ENCODE measurements at regions of chr3 and their contacts with region 1.

Region 1: GRCh38 chr3:69671082-69671952 is 67.9 kb upstream of the MITF start:
- DNase-seq: peak; percentile 32
- ATAC-seq: peak; percentile 47 to 64

Region 2: DNA sequence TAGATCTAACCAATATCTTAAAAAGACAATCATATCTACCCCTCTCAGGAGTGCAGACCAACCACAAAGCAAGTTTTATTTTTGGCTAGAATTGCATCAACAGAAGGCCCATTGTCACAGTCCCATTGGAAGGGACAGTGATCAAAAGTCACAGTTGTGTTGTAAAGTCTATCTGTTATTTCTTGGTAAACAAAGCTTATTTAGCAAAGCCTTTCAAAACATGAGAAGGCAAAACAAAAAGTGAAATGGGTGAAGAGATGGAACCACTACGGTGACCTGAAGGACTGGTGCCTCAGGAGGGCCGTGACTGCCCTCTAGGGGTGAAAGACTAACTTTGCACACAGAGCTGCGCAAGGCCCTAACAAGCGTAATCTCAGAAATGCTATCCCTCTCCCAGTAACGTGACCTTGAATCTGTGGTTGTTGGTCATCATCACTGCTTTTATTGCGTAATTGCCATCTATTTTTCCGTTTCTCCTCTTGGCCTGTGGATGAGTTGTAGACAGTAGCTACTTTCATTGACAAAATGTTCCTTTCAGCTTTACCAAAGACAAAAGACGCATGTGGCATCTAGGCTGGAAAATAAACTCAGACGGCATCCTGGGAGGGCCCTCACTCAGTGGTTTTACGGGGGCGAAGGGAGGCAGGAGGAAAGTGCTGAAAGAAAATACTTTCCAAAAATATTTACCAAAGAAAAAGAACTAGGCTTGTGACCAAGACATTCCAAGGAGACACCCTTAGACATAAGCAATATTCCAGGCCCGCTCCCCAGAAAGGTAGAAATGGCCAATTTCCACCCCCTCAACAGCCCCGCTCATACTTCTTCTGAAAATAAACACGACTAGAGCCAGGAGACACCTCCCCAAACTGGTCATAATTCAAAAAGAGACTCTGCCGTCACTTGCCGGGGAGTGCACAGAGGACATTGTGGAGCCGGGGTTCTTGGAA is 364.8 kb before region 1 on chr3:
- intact Hi-C with region 1: loop called in 1 of 2 experiments (anchors 5 kb)
- DNase-seq: peak; percentile 72
- ATAC-seq: peak; percentile 94 to 95